Activated T-helper 2 cell treated with anti-CD3 and anti-CD28 coated beads, Interferon-gamma antibody, Interleukin-2, Interleukin-4, amounts not matched to agents 10 μg/mL and 5 μg/mL and 100 μg/mL, durations not matched to agents 14 hours and 24 hours and 36 hours (primary cell): ENCODE measurements at regions of chr19 and their contacts with region 1.

Region 1: GRCh38 chr19:23914402-23915301 is at the start of gene ZNF726:
- DNase-seq: peak; percentile 85
- H3K4me3 Mint-ChIP-seq: peak within 1 kb of the TSS; percentile 94
- H3K27ac Mint-ChIP-seq: peak within 1 kb of the TSS; percentile 96
- H3K4me1 Mint-ChIP-seq: peaks cover 4% of the 10 kb centered on the region
- H3K27me3 Mint-ChIP-seq: no peaks in the 10 kb centered on the region
- total RNA-seq, gene ZNF726: 10.3 and 11.6 TPM in 2 replicates

Region 2: DNA sequence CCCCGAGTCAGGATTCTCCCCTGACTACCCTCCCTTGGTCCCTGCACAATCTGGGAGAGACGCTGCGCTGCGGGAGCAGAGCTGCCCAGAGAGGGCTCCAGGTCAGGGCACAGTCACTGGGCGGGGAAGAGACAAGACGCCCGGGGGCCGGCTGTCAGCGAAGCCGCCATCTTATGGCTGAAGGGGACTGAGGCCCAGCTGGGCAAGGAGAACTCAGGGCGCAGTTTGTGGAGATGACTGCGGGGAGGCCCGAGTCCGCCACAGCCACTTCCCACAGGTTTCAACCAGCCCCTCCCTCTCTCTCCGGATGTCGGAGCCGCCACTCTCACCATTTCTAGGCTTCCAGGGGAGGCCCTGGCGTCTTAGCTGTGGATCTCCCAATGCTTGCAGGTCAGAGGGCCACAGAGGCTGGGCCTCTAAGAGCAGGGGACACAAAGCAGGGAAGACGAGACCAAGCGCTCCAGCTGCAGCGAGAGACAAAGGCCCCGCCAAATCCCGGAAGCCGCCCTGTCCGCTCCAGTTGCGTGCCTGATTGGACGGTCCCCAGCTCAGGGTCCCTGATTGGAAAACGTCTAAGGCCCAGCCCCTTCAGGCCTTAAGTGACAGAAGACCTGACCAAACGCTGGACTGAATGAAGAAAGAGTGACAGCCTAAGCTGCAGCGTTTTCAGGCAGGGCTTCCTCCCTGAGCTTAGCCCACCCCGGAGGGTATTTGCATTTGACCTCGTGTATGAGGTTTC is 664.6 kb before region 1 on chr19 and contains the start of gene ZNF724:
- intact Hi-C with region 1: loop called (anchors 1 kb)
- DNase-seq: peak; percentile 89
- H3K4me3 Mint-ChIP-seq: peak within 1 kb of the TSS; percentile 97
- H3K27ac Mint-ChIP-seq: peak within 1 kb of the TSS; percentile 97
- H3K4me1 Mint-ChIP-seq: peaks cover 1% of the 10 kb centered on the region
- H3K27me3 Mint-ChIP-seq: no peaks in the 10 kb centered on the region
- total RNA-seq, gene ZNF724: 12.1 TPM in 2 replicates

Region 3: GRCh38 chr19:23686621-23687423 is 227.8 kb before region 1 on chr19 and contains the start of gene ZNF675:
- intact Hi-C with region 1: loop called (anchors 2 kb)
- DNase-seq: peak; percentile 84
- H3K4me3 Mint-ChIP-seq: peak within 1 kb of the TSS; percentile 91
- H3K27ac Mint-ChIP-seq: peak within 1 kb of the TSS; percentile 96
- H3K4me1 Mint-ChIP-seq: peaks cover 4% of the 10 kb centered on the region
- H3K27me3 Mint-ChIP-seq: no peaks in the 10 kb centered on the region
- total RNA-seq, gene ZNF675: 17.1 and 17.7 TPM in 2 replicates

Region 4: GRCh38 chr19:23758187-23759074 is 156.2 kb before region 1 on chr19 and contains the start of gene ZNF681:
- intact Hi-C with region 1: loop called (anchors 2 kb)
- DNase-seq: peak; percentile 80
- H3K4me3 Mint-ChIP-seq: peak within 1 kb of the TSS; percentile 92
- H3K27ac Mint-ChIP-seq: peak within 1 kb of the TSS; percentile 92
- H3K4me1 Mint-ChIP-seq: peaks cover 10% of the 10 kb centered on the region
- H3K27me3 Mint-ChIP-seq: no peaks in the 10 kb centered on the region
- total RNA-seq, gene ZNF681: 3.1 and 3.5 TPM in 2 replicates

Region 5: GRCh38 chr19:23901360-23901759 is 13.3 kb before region 1 on chr19:
- intact Hi-C with region 1: no loop called
- DNase-seq: no peak
- H3K4me3 Mint-ChIP-seq: no peak overlapping the region
- H3K27ac Mint-ChIP-seq: no peak overlapping the region
- H3K4me1 Mint-ChIP-seq: no peaks in the 10 kb centered on the region
- H3K27me3 Mint-ChIP-seq: no peaks in the 10 kb centered on the region

Region 6: DNA sequence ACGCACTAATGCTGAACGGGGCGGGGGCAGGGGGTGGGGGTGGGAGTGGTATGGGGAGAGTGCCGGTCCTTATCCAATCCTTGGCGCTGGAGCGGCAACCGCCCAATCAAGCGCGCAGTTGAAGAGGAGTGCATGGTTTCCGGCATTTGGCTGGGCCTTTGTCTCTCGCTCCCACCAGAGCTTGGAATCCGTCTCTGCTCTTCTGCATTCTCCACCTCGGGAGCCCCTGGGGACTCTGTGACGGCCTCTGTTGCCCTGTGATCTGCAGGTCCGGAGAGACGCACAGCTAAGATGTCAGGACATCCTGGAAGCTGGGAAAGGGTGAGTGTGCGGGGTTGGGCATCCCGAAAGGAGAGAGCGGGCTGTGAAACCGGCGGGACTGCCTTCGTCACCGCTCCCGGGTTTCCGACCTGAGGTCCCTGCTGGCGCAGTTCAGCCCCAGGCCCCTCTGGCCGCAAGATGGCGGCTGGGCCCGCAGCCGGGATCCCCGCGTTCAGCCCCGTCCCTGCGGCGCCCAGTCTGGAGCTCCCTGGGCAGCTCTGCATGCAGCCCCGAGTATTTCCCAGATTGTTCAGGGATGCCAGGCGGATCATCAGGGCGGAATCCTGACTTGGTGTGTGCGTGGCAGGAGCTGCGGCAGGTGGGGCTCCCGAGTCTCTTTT is 118.8 kb after region 1 on chr19:
- intact Hi-C with region 1: loop called (anchors 1 kb)
- DNase-seq: peak; percentile 79
- H3K4me3 Mint-ChIP-seq: peak overlapping the region; percentile 100
- H3K27ac Mint-ChIP-seq: peak overlapping the region; percentile 98
- H3K4me1 Mint-ChIP-seq: peaks cover 20% of the 10 kb centered on the region
- H3K27me3 Mint-ChIP-seq: no peaks in the 10 kb centered on the region